PC-3 (cell line): ENCODE measurements at regions of chr6 and their contacts with region 1.

Region 1: GRCh38 chr6:136317021-136317694 is 27.5 kb upstream of the BCLAF1 start:
- DNase-seq: peak; percentile 75
- ATAC-seq: peak; percentile 67
- H3K4me3 ChIP-seq: no peak overlapping the region
- H3K27ac ChIP-seq: no peak overlapping the region
- H3K4me1 ChIP-seq: no peaks in the 10 kb centered on the region
- H3K27me3 ChIP-seq: no peaks in the 10 kb centered on the region
- CTCF ChIP-seq: peak; percentile 79

Region 2: DNA sequence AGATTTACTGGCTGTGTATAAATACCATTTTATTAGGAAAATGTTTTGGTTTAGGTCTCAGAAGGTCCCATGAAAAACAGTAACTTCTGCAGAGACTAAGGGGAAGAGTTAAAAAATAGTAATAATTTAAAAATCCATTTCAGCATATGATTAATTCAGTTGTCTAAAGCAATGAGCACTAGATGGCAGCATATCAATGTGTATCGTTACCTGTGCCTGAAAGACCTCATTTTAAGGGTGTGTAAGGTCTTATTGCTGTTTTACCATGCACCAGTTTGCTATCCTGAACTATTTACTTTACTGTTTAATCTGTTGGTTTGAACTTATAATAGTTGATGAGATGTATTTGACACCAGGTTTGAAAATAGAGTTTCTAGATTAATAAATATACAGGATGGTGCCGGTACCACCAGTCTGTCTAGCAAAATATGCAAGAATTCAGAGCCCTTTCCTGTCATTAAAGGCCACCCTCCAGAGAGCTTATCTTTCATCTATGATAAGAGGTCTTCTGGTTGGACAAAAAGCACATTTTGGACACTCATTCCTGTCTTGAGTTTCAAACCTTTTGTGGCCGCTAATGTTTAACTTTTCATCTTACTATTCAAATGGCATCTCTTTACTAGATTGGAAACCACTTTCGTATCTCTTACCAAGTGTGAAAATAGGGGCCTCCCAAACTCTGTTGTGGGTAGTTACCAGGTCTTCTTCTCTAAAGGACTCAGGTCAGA is 810.7 kb before region 1 on chr6:
- CTCF ChIA-PET with region 1: no interaction called
- POLR2A ChIA-PET with region 1: no interaction called
- intact Hi-C with region 1: loop called (anchors 2 kb)
- DNase-seq: peak; percentile 69
- ATAC-seq: peak; percentile 53; the same call in 1 of the 2 replicates
- H3K4me3 ChIP-seq: no peak overlapping the region
- H3K27ac ChIP-seq: no peak overlapping the region
- H3K4me1 ChIP-seq: no peaks in the 10 kb centered on the region
- H3K27me3 ChIP-seq: no peaks in the 10 kb centered on the region
- CTCF ChIP-seq: peak; percentile 72

Region 3: GRCh38 chr6:136249811-136250685 is 67.1 kb before region 1 on chr6 and contains the start of gene MTFR2:
- CTCF ChIA-PET with region 1: no interaction called
- POLR2A ChIA-PET with region 1: no interaction called
- intact Hi-C with region 1: loop called (anchors 2 kb)
- DNase-seq: peak; percentile 98
- ATAC-seq: peak; percentile 87
- H3K4me3 ChIP-seq: peak within 1 kb of the TSS; percentile 87
- H3K27ac ChIP-seq: peak within 1 kb of the TSS; percentile 49
- H3K4me1 ChIP-seq: peaks cover 16% of the 10 kb centered on the region; the same call in 1 of the 2 replicates
- H3K27me3 ChIP-seq: no peaks in the 10 kb centered on the region
- CTCF ChIP-seq: no peak
- total RNA-seq, gene MTFR2: 6.2 and 12.4 TPM in 2 replicates

Region 4: DNA sequence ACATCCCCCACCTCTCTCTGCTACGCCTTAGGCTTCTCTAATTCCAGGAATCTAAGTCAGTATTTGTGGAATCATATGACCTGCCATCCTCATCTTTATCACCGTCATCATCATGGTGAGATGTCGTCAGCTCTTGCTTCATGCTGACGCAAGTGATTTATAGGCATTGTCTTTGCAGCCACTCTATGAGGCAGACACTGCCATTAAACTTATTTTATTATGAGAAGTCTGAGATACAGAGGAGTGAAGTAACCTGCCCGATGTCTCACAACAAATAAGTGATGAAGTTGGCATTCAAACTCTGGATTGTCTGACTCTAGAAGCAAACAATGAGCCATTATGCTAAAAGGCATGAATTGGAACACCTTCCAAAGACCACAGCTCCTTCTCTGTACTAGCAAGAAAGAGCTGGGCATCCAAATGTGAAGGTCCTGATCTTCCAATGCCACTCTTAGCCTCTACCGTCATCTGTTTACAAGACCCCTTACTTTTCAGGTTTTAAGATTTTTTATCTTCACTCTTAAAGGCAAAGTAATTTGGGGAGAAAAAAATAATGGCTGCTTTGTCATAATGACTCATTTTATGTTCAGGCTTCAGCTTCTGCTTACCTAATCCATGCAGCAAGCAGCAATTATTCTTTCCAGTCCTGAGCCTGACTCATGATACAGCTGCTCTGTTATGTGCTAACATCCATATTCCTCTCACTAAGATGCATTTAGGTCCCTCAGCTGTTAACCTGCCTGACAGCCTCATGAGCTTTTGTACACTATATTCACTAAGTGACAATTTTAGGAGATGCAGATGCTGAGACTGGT is 86.2 kb after region 1 on chr6:
- CTCF ChIA-PET with region 1: no interaction called
- POLR2A ChIA-PET with region 1: no interaction called
- intact Hi-C with region 1: no loop called
- DNase-seq: peak; percentile 88
- ATAC-seq: peak; percentile 91
- H3K4me3 ChIP-seq: no peak overlapping the region
- H3K27ac ChIP-seq: peak overlapping the region; percentile 99
- H3K4me1 ChIP-seq: peaks cover 52% of the 10 kb centered on the region
- H3K27me3 ChIP-seq: no peaks in the 10 kb centered on the region
- CTCF ChIP-seq: no peak